Ascending aorta (tissue), 2 donors: ENCODE measurements at regions of chr20 and their contacts with region 1.

Region 1: GRCh38 chr20:45857114-45857881 is at the starts of genes ACOT8 and ZSWIM3:
- DNase-seq: peak; percentile 96 to 99
- H3K4me3 ChIP-seq: peak within 1 kb of the TSS; percentile 95 to 96
- H3K27ac ChIP-seq: peak within 1 kb of the TSS; percentile 62 to 75
- H3K4me1 ChIP-seq: peaks cover 3 to 29% of the 10 kb centered on the region in 2 donors
- H3K27me3 ChIP-seq: no peaks in the 10 kb centered on the region
- CTCF ChIP-seq: no peak
- total RNA-seq, gene ACOT8: 34.4 TPM
- total RNA-seq, gene ZSWIM3: 6.8 TPM

Region 2: GRCh38 chr20:45727044-45727443 is 130.3 kb before region 1 on chr20:
- intact Hi-C with region 1: no loop called
- DNase-seq: no peak
- H3K4me3 ChIP-seq: no peak overlapping the region
- H3K27ac ChIP-seq: no peak overlapping the region
- H3K4me1 ChIP-seq: no peaks in the 10 kb centered on the region
- H3K27me3 ChIP-seq: no peaks in the 10 kb centered on the region
- CTCF ChIP-seq: no peak

Region 3: DNA sequence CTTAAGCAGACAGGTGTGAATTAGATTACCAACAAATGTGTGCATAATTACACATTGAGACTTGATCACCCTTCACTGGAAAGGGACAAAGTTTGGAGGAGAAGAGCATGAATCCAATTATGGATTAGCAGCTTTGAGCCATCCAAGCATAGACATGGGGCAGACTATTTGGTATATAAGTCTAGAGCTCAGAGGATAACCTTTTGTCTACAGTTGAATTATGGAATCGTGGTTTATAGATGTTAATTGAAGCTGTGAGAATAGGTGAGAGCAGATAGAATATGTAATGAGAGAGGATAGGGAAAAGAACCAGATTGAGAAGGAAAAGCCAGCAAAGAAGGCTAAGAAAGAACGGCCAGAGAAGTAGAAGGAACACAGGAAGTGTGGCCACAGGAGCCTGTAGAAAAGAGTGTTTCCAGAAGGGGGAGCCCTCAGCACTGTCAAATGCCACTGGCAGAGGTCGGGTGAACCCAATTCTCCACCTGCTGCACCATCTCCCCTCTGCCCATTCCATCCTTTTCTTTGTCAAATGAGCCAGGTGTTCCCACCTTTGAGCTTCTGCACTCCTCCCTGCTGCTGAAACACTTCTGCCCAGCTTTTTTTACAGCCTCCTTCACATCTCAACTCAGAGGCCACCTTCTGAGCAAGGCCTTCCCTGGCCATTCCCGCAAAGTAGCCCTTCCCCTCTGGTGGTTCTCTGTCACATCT is 58.2 kb before region 1 on chr20:
- intact Hi-C with region 1: loop called (anchors 2 kb)
- DNase-seq: peak in 1 of 2 donors; percentile 82
- H3K4me3 ChIP-seq: no peak overlapping the region
- H3K27ac ChIP-seq: peak overlapping the region; percentile 44 to 51
- H3K4me1 ChIP-seq: no peaks in the 10 kb centered on the region
- H3K27me3 ChIP-seq: no peaks in the 10 kb centered on the region
- CTCF ChIP-seq: peak; percentile 70 to 77 (median 75)

Region 4: GRCh38 chr20:45812157-45813020 is 44.9 kb before region 1 on chr20 and contains the start of gene UBE2C:
- intact Hi-C with region 1: loop called (anchors 1 kb)
- DNase-seq: peak; percentile 95 to 99
- H3K4me3 ChIP-seq: peak within 1 kb of the TSS; percentile 56 to 80
- H3K27ac ChIP-seq: peak within 1 kb of the TSS; percentile 16 to 45
- H3K4me1 ChIP-seq: peaks cover 9% of the 10 kb centered on the region in 2 donors
- H3K27me3 ChIP-seq: no peaks in the 10 kb centered on the region
- CTCF ChIP-seq: no peak
- total RNA-seq, gene UBE2C: not detected

Region 5: GRCh38 chr20:45833883-45834796 is 23.2 kb before region 1 on chr20:
- intact Hi-C with region 1: loop called (anchors 2 kb)
- DNase-seq: peak in 1 of 2 donors; percentile 82
- H3K4me3 ChIP-seq: peak overlapping the region; percentile 60 to 92
- H3K27ac ChIP-seq: peak overlapping the region; percentile 96 to 97
- H3K4me1 ChIP-seq: peaks cover 23 to 32% of the 10 kb centered on the region in 2 donors
- H3K27me3 ChIP-seq: no peaks in the 10 kb centered on the region
- CTCF ChIP-seq: no peak

Region 6: DNA sequence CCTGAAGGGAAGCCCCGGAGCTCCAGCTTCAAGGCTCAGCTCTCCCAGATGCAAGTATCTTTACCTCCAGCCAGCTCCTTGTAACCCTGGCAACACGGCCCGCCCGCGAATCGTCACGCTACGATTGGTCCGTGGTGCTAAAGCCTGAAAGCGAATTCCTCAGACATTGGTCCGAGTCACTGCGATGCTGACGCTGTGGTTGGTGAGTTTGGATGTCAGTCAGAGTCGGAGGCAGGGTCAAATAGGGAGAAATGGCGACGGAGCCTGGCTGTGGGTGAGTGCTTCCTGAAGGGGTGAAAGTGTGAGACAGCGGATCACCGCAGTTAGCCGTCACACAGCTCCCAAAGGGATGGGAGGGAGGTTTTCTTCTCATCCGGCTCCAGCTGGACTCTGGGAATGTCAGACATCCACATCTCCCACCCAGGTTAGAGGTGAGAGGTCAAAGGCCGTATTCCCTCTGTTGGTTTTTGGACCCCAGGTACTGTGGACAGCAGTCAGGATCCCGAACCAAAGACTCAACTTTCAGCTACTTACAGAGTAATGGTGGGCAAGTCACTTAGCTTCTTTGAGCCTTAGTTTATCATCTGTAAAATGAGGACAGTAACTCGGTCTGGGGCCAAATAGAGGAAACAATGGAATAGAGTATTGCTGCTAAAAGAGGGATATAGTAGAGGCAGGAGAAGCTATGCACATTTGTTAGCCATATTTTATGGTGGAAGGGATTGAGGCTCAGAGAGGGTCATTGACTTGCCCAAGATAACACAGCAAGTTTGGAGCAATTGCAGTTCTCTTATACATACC is 23.9 kb after region 1 on chr20 and contains the start of gene ZSWIM1:
- intact Hi-C with region 1: loop called (anchors 1 kb)
- DNase-seq: peak; percentile 99 to 100
- H3K4me3 ChIP-seq: peak within 1 kb of the TSS; percentile 67 to 71
- H3K27ac ChIP-seq: peak within 1 kb of the TSS; percentile 83 to 88
- H3K4me1 ChIP-seq: peaks cover 0 to 14% of the 10 kb centered on the region in 2 donors
- H3K27me3 ChIP-seq: no peaks in the 10 kb centered on the region
- CTCF ChIP-seq: no peak
- total RNA-seq, gene ZSWIM1: 3.5 TPM

Region 7: DNA sequence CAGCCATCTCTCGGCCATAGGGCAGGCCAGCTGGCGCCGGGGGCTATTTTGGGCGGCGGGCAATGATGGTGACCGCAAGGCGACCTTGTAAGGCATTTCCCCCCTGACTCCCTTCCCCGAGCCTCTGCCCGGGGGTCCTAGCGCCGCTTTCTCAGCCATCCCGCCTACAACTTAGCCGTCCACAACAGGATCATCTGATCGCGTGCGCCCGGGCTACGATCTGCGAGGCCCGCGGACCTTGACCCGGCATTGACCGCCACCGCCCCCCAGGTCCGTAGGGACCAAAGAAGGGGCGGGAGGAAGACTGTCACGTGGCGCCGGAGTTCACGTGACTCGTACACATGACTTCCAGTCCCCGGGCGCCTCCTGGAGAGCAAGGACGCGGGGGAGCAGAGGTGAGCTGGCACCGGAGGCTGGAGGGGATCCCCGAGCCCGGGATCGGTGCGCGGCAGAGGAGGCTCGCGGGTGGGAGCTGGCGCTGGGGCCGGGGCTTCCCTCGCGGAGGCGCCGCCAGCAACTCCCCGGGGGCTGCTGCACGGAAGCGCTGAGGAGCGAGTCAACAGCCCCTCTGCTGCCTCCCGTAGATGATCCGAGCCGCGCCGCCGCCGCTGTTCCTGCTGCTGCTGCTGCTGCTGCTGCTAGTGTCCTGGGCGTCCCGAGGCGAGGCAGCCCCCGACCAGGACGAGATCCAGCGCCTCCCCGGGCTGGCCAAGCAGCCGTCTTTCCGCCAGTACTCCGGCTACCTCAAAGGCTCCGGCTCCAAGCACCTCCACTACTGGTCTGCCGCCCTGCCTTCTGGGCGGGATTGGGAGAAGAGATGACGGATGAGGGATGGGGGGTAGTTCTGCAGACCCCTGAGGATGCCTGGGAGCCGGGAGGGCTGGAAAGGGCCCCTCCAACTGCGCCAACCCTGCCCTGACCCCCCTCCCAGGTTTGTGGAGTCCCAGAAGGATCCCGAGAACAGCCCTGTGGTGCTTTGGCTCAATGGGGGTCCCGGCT is 34.0 kb after region 1 on chr20 and contains the starts of genes CTSA and NEURL2:
- intact Hi-C with region 1: loop called (anchors 2 kb)
- DNase-seq: peak; percentile 76 to 96
- H3K4me3 ChIP-seq: peak within 1 kb of the TSS; percentile 71 to 87
- H3K27ac ChIP-seq: peak within 1 kb of the TSS; percentile 68 to 71
- H3K4me1 ChIP-seq: peaks cover 8 to 12% of the 10 kb centered on the region in 2 donors
- H3K27me3 ChIP-seq: no peaks in the 10 kb centered on the region
- CTCF ChIP-seq: no peak
- total RNA-seq, gene CTSA: 82.0 TPM
- total RNA-seq, gene NEURL2: 4.0 TPM